Activated CD8-positive, alpha-beta T cell treated with anti-CD3 and anti-CD28 coated beads for 36 hours (primary cell): ENCODE measurements at regions of chr10 and their contacts with region 1.

Region 1: GRCh38 chr10:124697830-124698544 is 46.2 kb downstream of the FAM53B start:
- DNase-seq: peak; percentile 76
- ATAC-seq: peak; percentile 50
- H3K4me3 Mint-ChIP-seq: no peak overlapping the region
- H3K27ac Mint-ChIP-seq: peak overlapping the region; percentile 98
- H3K4me1 Mint-ChIP-seq: peaks cover 93% of the 10 kb centered on the region
- H3K27me3 Mint-ChIP-seq: no peaks in the 10 kb centered on the region
- CTCF ChIP-seq: no peak

Region 2: DNA sequence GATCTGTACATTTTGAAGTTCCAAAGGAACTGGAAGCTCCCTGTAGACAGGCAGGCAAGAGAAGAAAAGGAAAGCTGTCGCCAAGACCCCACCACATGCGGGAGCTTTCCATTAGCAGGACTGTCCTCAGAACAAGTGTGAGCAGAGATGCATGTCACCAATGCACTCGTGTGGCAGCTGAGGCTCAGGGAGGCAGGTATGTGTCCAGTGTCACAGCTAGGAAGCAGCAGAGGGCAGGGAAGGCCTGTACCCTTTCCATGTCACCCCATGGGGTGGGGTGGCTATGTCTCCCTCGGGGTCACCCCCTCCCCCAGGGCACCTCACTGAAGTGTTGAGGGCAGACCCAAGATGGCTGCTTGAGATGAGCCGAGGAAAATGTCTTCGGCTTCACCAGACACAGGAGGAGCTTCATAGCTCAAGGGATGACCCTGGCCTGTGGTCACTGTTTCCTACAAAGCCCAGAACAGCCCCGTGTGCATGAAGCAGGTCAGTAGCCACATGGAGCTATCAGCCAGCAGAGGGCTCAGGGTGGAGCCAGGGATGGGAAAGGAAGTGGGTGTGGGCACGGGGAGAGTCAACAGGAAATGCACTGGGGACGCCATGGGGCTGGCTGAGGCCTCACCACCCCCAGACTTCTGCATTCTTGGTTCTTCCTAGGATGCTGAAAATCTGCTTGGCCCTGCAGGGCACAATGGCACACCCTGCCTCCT is 50.4 kb before region 1 on chr10:
- CTCF ChIA-PET with region 1: interaction called, 11 read pairs
- POLR2A ChIA-PET with region 1: interaction called, 4 read pairs
- intact Hi-C with region 1: no loop called
- DNase-seq: peak; percentile 83
- ATAC-seq: peak; percentile 70
- H3K4me3 Mint-ChIP-seq: peak overlapping the region; percentile 33
- H3K27ac Mint-ChIP-seq: peak overlapping the region; percentile 88
- H3K4me1 Mint-ChIP-seq: peaks cover 81% of the 10 kb centered on the region
- H3K27me3 Mint-ChIP-seq: no peaks in the 10 kb centered on the region
- CTCF ChIP-seq: peak; percentile 31

Region 3: GRCh38 chr10:124671486-124672075 is 26.4 kb before region 1 on chr10:
- CTCF ChIA-PET with region 1: interaction called, 7 read pairs
- POLR2A ChIA-PET with region 1: interaction called, 14 read pairs
- intact Hi-C with region 1: no loop called
- DNase-seq: peak; percentile 49
- ATAC-seq: peak; percentile 65
- H3K4me3 Mint-ChIP-seq: no peak overlapping the region
- H3K27ac Mint-ChIP-seq: peak overlapping the region; percentile 59
- H3K4me1 Mint-ChIP-seq: peaks cover 61% of the 10 kb centered on the region
- H3K27me3 Mint-ChIP-seq: no peaks in the 10 kb centered on the region
- CTCF ChIP-seq: peak; percentile 45

Region 4: DNA sequence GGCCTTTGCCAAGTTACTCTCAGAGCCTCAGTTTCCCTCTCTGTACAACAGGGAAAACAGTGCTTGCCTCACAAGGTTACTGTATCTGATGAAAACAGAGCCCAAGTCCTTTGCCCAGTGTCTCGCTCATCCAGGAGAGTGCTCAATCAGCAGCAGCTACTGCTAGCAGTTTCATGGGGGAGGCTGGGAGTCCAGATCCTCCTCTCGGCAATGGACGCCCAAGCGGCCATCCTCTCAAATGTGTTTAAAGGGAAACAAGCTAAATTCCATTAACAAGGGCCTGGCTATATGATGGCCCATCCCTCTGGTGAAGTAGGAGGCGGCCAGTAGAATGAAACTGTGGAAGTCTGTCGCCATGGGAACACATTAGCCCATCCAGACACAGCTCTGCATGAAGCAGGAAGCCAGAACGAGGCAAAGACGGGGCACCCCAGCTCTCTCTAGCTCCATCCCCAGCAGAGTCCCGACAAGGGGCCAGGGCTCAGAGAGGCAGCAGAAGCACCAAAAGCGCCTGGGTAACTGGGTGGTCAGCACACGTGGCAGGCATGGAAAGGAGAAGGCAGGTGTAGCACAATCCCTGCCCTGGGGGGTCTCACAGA is 11.0 kb after region 1 on chr10:
- CTCF ChIA-PET with region 1: interaction called, 4 read pairs
- POLR2A ChIA-PET with region 1: interaction called, 27 read pairs
- intact Hi-C with region 1: no loop called
- DNase-seq: no peak
- ATAC-seq: no peak
- H3K4me3 Mint-ChIP-seq: no peak overlapping the region
- H3K27ac Mint-ChIP-seq: peak overlapping the region; percentile 21
- H3K4me1 Mint-ChIP-seq: peaks cover 81% of the 10 kb centered on the region
- H3K27me3 Mint-ChIP-seq: no peaks in the 10 kb centered on the region
- CTCF ChIP-seq: no peak

Region 5: GRCh38 chr10:124820121-124820520 is 122.1 kb after region 1 on chr10:
- CTCF ChIA-PET with region 1: no interaction called
- POLR2A ChIA-PET with region 1: no interaction called
- intact Hi-C with region 1: no loop called
- DNase-seq: no peak
- ATAC-seq: no peak
- H3K4me3 Mint-ChIP-seq: no peak overlapping the region
- H3K27ac Mint-ChIP-seq: no peak overlapping the region
- H3K4me1 Mint-ChIP-seq: no peaks in the 10 kb centered on the region
- H3K27me3 Mint-ChIP-seq: no peaks in the 10 kb centered on the region
- CTCF ChIP-seq: no peak